HCT116 (cell line): ENCODE measurements at regions of chr10 and their contacts with region 1.

Region 1: GRCh38 chr10:14200698-14201544 is 129.8 kb downstream of the FRMD4A start:
- DNase-seq: no peak
- ATAC-seq: peak; percentile 74
- H3K4me3 ChIP-seq: no peak overlapping the region
- H3K27ac ChIP-seq: no peak overlapping the region
- H3K4me1 ChIP-seq: no peaks in the 10 kb centered on the region
- H3K27me3 ChIP-seq: peaks cover 37% of the 10 kb centered on the region
- CTCF ChIP-seq: peak; percentile 3 to 61 (median 49); a peak in 4 of 6 replicates
- POLR2A ChIP-seq: no peak
- RAD21 ChIP-seq: no peak

Region 2: GRCh38 chr10:14185316-14186045 is 15.4 kb before region 1 on chr10:
- CTCF ChIA-PET with region 1: interaction called, 40 read pairs
- POLR2A ChIA-PET with region 1: interaction called, 11 read pairs
- RAD21 ChIA-PET with region 1: no interaction called
- intact Hi-C with region 1: no loop called
- DNase-seq: peak; percentile 40
- ATAC-seq: peak; percentile 78
- H3K4me3 ChIP-seq: no peak overlapping the region
- H3K27ac ChIP-seq: no peak overlapping the region
- H3K4me1 ChIP-seq: no peaks in the 10 kb centered on the region
- H3K27me3 ChIP-seq: peaks cover 43% of the 10 kb centered on the region
- CTCF ChIP-seq: no peak
- POLR2A ChIP-seq: peak; percentile 62
- RAD21 ChIP-seq: no peak

Region 3: DNA sequence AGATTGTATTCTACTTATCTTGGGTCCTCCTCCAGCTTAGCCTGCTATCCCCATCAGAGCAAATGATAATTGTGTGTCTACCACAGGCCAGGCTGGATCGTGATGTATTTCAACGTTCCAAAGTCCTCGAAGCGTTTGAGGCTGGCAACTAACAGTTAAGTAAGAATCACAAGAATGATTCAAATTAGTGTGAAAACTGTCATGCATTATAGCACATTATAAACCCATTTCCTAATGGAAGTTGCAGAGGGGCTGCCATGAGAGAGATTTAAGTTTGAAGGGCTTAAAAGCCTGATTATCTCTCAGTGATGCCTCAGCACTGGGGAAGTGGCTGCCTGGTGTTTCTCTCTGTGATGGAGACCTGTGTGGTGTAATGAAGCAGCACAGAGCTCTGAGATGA is 10.7 kb after region 1 on chr10:
- CTCF ChIA-PET with region 1: interaction called, 14 read pairs
- POLR2A ChIA-PET with region 1: no interaction called
- RAD21 ChIA-PET with region 1: no interaction called
- intact Hi-C with region 1: no loop called
- DNase-seq: no peak
- ATAC-seq: no peak
- H3K4me3 ChIP-seq: no peak overlapping the region
- H3K27ac ChIP-seq: no peak overlapping the region
- H3K4me1 ChIP-seq: no peaks in the 10 kb centered on the region
- H3K27me3 ChIP-seq: peaks cover 25% of the 10 kb centered on the region
- CTCF ChIP-seq: no peak
- POLR2A ChIP-seq: no peak
- RAD21 ChIP-seq: no peak

Region 4: GRCh38 chr10:14325325-14325955 is 124.5 kb after region 1 on chr10:
- CTCF ChIA-PET with region 1: interaction called, 11 read pairs
- POLR2A ChIA-PET with region 1: no interaction called
- RAD21 ChIA-PET with region 1: no interaction called
- intact Hi-C with region 1: loop called (anchors 1 kb)
- DNase-seq: peak; percentile 50
- ATAC-seq: peak; percentile 76
- H3K4me3 ChIP-seq: no peak overlapping the region
- H3K27ac ChIP-seq: no peak overlapping the region
- H3K4me1 ChIP-seq: no peaks in the 10 kb centered on the region
- H3K27me3 ChIP-seq: peaks cover 49% of the 10 kb centered on the region
- CTCF ChIP-seq: peak; percentile 36 to 88 (median 78); a peak in 5 of 6 replicates
- POLR2A ChIP-seq: no peak
- RAD21 ChIP-seq: peak; percentile 57